Calu3 (cell line): ENCODE measurements at regions of chr4 and their contacts with region 1.

Region 1: DNA sequence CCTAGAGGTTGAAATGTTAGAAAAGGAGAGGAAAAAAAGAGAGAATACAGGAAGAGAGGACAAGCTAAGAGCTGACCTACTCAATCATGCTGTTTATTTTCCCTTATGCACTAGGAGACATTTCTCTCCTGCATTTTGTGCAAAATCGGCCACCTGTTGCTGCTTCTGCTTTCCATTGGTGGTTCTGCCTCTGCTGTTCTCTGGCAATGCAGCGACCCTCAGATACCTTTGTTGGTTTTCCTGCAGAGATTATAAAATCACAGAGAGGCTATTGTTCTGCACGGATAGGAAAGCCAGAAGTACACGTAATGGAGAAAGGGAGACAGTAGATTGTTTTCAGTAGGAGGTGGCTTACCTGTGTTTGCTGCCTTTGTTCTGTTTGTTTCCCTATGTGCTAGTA is 108.9 kb downstream of the UNC5C start:
- DNase-seq: no peak
- H3K4me3 Mint-ChIP-seq: no peak overlapping the region
- H3K27ac Mint-ChIP-seq: no peak overlapping the region
- H3K4me1 Mint-ChIP-seq: no peaks in the 10 kb centered on the region
- H3K27me3 Mint-ChIP-seq: no peaks in the 10 kb centered on the region
- CTCF ChIP-seq: no peak

Region 2: GRCh38 chr4:95232358-95233156 is 207.3 kb before region 1 on chr4:
- CTCF ChIA-PET with region 1: no interaction called
- intact Hi-C with region 1: loop called (anchors 10 kb)
- DNase-seq: peak; percentile 4
- H3K4me3 Mint-ChIP-seq: peak overlapping the region; percentile 52
- H3K27ac Mint-ChIP-seq: peak overlapping the region; percentile 64
- H3K4me1 Mint-ChIP-seq: peaks cover 9% of the 10 kb centered on the region
- H3K27me3 Mint-ChIP-seq: no peaks in the 10 kb centered on the region
- CTCF ChIP-seq: no peak

Region 3: GRCh38 chr4:95798003-95798402 is 358.1 kb after region 1 on chr4:
- CTCF ChIA-PET with region 1: no interaction called
- intact Hi-C with region 1: no loop called
- DNase-seq: no peak
- H3K4me3 Mint-ChIP-seq: no peak overlapping the region
- H3K27ac Mint-ChIP-seq: no peak overlapping the region
- H3K4me1 Mint-ChIP-seq: no peaks in the 10 kb centered on the region
- H3K27me3 Mint-ChIP-seq: no peaks in the 10 kb centered on the region
- CTCF ChIP-seq: no peak